Sigmoid colon (tissue), 7 donors: ENCODE measurements at regions of chr5 and their contacts with region 1.

Region 1: DNA sequence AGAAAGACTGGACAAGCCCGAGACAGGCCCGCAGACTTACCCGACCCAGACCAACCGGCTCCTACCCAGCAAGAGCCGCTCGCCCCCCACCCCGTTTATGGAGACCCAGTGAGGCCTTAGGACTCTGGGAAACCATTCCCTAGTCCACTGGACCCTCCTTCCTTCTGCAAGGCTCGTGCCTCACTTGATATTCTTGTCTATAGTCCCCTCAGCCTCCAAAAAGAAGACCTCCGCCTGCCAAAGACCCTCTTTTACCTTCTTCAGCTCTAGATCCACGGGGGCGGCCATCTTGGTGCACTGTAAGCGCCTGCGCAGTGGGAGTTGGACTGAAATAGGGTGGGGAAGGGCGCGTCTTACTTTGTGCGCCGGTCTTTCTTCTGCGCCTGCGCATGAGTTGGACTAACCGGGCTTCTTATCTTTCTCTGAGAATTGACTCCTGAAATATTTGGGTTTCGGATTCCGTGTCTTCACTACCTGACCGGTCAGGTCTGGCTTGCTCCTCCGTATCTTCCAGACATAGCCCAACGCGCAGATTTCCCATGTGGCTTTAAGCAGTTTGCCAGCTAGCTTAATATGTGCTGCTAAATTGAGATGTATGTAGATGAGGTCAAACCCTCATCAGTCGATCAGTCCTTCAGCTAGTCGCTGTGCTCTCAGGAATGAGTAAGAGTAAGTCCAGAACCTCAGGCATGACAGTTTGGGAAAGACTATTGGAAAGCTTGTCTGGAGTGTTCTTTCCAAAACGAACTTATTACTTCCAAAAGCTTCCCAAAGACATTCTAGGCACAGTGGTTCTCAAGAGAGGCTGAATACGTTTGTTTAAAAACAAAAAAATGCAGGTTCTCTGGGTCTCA is at the start of gene PFDN1:
- DNase-seq: peak; percentile 98
- H3K4me3 ChIP-seq: peak within 1 kb of the TSS; percentile 66 to 88 (median 77)
- H3K27ac ChIP-seq: peak within 1 kb of the TSS; percentile 81 to 89 (median 84)
- H3K4me1 ChIP-seq: peaks cover 0 to 50% (median 30%) of the 10 kb centered on the region in 4 donors
- H3K27me3 ChIP-seq: no peaks in the 10 kb centered on the region
- CTCF ChIP-seq: no peak
- EP300 ChIP-seq: no peak
- POLR2A ChIP-seq: peak in 1 of 2 donors; percentile 42
- total RNA-seq, gene PFDN1: 88.2 to 159 (median 123) TPM

Region 2: GRCh38 chr5:140251527-140251973 is 51.5 kb before region 1 on chr5:
- intact Hi-C with region 1: no loop called
- DNase-seq: no peak
- H3K4me3 ChIP-seq: no peak overlapping the region
- H3K27ac ChIP-seq: no peak overlapping the region
- H3K4me1 ChIP-seq: peaks cover 0 to 34% (median 18%) of the 10 kb centered on the region in 4 donors
- H3K27me3 ChIP-seq: no peaks in the 10 kb centered on the region
- CTCF ChIP-seq: no peak
- EP300 ChIP-seq: no peak
- POLR2A ChIP-seq: no peak

Region 3: DNA sequence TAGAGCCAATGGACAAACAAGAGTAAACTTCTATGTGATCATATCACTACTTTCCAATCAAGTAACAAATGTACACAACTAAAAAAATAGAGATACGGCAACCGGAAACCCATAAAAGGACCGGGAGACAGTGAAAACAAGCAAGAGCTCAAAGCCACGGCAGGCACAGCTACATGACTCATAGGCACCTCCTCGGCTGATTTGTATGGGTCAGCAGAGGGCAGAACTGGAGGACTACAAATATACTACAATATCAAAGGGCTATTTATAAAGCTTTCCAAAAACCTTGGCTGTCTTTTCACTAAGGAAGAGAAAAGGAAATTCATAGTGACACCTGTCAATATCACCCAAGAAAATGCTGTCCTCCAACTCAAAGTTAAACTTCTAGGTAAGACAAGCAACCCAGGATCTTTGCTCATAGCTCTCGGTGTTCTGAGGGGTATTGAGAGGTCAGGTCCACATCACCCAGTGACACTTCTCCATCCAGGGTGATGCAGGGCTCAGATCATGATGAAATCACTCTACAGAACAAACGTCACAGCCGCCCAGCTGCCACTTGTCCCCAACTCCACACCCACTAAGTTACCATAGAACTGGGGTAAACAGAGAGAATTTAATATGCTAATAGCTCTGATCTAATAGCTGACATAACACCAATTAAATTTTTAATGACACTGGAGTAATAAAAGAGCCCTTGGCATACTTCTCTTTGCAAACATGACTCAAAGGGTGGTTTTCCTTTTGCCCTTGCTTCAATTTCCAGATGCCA is 41.4 kb before region 1 on chr5:
- intact Hi-C with region 1: loop called (anchors 5 kb)
- DNase-seq: peak; percentile 88
- H3K4me3 ChIP-seq: peak overlapping the region in 1 of 4 donors; percentile 13
- H3K27ac ChIP-seq: peak overlapping the region; percentile 3 to 79 (median 72)
- H3K4me1 ChIP-seq: peaks cover 0 to 30% (median 19%) of the 10 kb centered on the region in 4 donors
- H3K27me3 ChIP-seq: no peaks in the 10 kb centered on the region
- CTCF ChIP-seq: no peak
- EP300 ChIP-seq: peak in 2 of 4 donors; percentile 6 to 12
- POLR2A ChIP-seq: no peak

Region 4: GRCh38 chr5:140351609-140352334 is 48.8 kb after region 1 on chr5:
- intact Hi-C with region 1: loop called (anchors 2 kb)
- DNase-seq: no peak
- H3K4me3 ChIP-seq: no peak overlapping the region
- H3K27ac ChIP-seq: no peak overlapping the region
- H3K4me1 ChIP-seq: peaks cover 0 to 12% (median 7%) of the 10 kb centered on the region in 4 donors
- H3K27me3 ChIP-seq: no peaks in the 10 kb centered on the region
- CTCF ChIP-seq: peak; percentile 81 to 96 (median 87)
- EP300 ChIP-seq: no peak
- POLR2A ChIP-seq: no peak

Region 5: DNA sequence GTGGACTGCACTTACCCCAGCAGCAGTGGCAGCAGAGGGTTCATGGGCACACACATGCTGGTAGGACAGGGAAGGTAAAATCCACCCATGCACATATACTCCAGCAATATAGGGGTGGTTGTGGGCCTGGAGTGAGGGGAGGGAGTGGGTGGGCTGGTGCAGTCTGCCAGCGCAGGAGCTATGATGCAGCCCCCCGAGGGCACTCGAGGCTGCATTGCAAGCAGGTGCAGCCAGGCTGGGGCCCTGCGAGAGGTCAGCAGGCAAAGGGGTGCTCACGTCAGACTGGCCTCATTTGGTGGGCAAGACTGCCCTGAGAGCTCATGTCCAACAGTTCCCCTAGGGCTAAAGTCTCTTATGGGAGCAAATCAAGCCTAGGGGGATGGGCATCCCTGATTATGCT is 450.5 kb after region 1 on chr5:
- intact Hi-C with region 1: no loop called
- DNase-seq: no peak
- H3K4me3 ChIP-seq: no peak overlapping the region
- H3K27ac ChIP-seq: no peak overlapping the region
- H3K4me1 ChIP-seq: no peaks in the 10 kb centered on the region
- H3K27me3 ChIP-seq: no peaks in the 10 kb centered on the region
- CTCF ChIP-seq: no peak
- EP300 ChIP-seq: no peak
- POLR2A ChIP-seq: no peak